Posterior vena cava (tissue), 2 donors: ENCODE measurements at regions of chr13 and their contacts with region 1.

Region 1: DNA sequence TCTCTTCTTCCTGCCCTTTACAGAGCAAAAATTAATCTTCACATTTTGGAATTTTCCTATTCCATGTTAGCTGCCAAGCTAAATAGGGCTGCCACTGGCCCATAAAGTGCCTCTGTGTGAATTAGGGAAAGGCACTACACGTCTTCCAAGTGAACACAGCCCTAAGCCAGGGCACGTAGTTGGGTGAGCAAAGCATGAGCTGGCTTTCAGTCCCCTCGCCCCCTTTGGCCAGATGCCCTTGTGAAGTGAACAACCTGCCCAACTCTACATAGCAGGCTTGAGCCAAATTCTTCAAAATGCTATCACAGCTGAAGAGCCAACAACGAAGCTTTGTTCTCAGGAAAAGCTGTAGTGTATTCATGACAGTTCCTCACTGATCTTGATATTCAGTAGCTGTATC is 213.1 kb downstream of the OXGR1 start:
- DNase-seq: peak; percentile 80

Region 2: DNA sequence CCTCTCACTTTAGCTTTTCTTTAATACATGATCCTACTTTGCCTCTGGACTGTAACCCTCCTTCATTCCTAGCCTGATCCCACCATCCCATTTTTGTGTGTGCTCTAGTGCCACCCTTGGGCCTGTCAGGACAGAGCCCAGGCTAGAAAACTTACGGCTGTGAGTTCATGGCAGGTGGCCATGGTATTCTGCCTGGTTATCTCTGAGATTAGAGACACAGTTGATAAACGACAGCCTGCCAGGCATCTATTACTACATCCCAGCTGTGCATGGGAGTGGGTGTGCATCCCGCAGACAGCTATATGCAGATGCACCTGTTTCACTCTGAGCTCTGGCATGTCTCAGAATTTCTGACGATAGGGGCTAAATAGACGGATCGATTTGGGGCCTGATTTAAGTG is 580.3 kb before region 1 on chr13:
- intact Hi-C with region 1: loop called in 1 of 2 experiments (anchors 10 kb)
- DNase-seq: no peak